Gastrocnemius medialis (tissue), 4 donors: ENCODE measurements at regions of chrX and their contacts with region 1.

Region 1: DNA sequence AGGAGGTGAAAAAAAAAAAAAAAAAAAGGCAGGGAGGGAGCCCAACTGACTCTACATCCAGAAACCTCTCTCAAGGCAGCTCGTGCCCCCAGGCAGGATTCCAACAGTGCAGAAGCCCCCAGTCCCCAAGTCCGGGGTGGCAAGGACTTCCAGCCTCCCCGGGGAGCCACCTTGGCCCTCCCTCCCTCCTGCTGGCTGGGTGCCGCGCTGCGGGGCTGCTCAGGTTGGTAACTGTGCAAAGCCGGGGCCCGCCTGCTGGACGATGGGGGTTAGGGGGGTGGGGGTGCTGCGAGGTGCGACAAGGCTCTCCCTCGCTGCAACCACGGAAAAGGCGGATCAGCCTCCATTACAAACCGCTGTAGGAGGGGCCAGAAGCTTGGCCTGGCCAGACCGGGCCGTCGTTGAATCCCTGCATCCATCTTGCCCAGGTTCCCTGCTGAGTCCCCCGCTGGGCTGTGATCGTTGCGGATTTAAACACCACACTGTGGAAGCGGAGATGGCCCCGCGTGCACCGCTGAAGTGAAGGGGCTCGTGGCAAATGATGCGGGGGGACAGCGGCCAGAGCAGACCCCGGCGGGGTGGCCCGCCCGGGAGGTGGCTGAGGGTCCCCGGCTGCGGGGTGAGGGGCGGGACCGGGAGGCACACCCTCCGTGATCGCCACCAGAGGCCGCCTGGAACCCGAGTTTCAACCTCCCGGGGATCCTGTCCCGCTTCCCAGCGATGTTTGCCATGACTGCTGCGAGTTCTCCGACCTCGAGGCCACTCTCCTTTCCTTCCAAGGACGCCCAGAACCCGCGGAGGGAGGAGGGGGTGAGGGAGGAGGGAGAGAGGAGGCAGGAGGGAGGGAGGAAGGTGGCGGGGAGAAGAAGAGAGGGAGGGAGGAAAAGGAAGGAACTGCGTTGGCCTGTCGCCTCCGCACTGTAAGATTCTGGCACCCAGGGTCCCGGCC is 58.0 kb upstream of the DDX3X start:
- DNase-seq: peak; percentile 20 to 44
- ATAC-seq: peak; percentile 78 to 89
- H3K4me3 ChIP-seq: peak overlapping the region; percentile 51 to 56 (median 53)
- H3K27ac ChIP-seq: peak overlapping the region in 1 of 4 donors; percentile 28
- H3K4me1 ChIP-seq: peaks cover 0 to 8% of the 10 kb centered on the region in 2 donors
- H3K27me3 ChIP-seq: peaks cover 0 to 16% (median 9%) of the 10 kb centered on the region in 3 donors
- CTCF ChIP-seq: peak; percentile 24 to 67 (median 55)
- POLR2A ChIP-seq: no peak

Region 2: GRCh38 chrX:39550795-39551361 is 1725.1 kb before region 1 on chrX:
- in situ Hi-C with region 1: no loop called
- intact Hi-C with region 1: no loop called
- DNase-seq: no peak
- ATAC-seq: no peak
- H3K4me3 ChIP-seq: no peak overlapping the region
- H3K27ac ChIP-seq: no peak overlapping the region
- H3K4me1 ChIP-seq: no peaks in the 10 kb centered on the region
- H3K27me3 ChIP-seq: no peaks in the 10 kb centered on the region
- CTCF ChIP-seq: no peak
- POLR2A ChIP-seq: no peak

Region 3: GRCh38 chrX:41412261-41413081 is 136.5 kb after region 1 on chrX:
- in situ Hi-C with region 1: loop called in 1 of 4 experiments (anchors 25 kb)
- intact Hi-C with region 1: no loop called
- DNase-seq: no peak
- ATAC-seq: no peak
- H3K4me3 ChIP-seq: no peak overlapping the region
- H3K27ac ChIP-seq: peak overlapping the region in 2 of 4 donors; percentile 31 to 40
- H3K4me1 ChIP-seq: no peaks in the 10 kb centered on the region
- H3K27me3 ChIP-seq: no peaks in the 10 kb centered on the region
- CTCF ChIP-seq: no peak
- POLR2A ChIP-seq: no peak

Region 4: DNA sequence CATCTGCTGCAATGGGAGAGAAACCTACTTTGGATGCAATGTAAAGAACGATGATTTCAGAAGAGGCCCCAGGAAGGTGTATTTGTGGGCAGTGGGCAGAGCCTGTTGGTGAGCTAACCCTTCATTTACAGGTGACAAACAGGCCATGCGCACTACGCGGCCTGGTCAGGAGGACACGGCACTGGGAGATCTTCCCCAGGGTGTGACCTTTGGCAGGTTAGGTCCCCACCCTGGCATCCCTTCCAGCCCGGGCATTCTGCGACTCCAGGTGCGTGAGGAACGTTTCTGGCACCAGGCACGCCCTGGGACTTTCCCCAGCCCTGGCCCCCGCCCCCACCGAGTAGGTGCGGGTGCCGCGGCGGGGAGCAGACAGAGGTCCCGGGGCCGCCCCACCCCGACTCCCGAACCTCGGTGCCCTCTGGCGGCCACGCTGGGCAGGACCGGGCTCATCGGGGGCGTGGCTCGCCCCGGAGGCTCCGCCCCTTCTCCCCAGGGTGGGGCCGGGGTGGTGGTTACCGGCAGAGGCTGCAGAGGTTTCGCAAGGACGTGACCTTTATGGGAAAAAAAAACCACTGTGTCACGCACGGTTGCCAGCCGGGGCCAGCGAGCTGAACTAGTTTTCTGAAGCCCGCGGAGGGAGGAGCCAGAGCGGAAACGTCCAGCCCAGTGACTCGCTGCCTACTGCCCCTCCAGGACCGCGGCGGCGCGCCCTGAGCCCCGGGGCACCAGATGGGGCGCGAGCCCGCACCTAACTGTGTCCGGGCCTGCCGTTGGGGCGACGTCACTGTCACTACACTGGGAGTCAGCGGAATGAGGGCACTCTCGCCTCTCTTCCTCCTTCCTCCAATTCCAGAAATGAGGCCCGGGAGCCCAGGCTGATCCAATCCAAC is 166.2 kb after region 1 on chrX:
- in situ Hi-C with region 1: no loop called
- intact Hi-C with region 1: loop called (anchors 2 kb)
- DNase-seq: peak; percentile 84 to 93
- ATAC-seq: peak; percentile 85 to 95
- H3K4me3 ChIP-seq: peak overlapping the region; percentile 34 to 57 (median 40)
- H3K27ac ChIP-seq: peak overlapping the region; percentile 75 to 92 (median 82)
- H3K4me1 ChIP-seq: peaks cover 0 to 7% of the 10 kb centered on the region in 2 donors
- H3K27me3 ChIP-seq: no peaks in the 10 kb centered on the region
- CTCF ChIP-seq: peak; percentile 60 to 86 (median 65)
- POLR2A ChIP-seq: peak; percentile 68 to 73

Region 5: GRCh38 chrX:41759817-41760216 is 483.9 kb after region 1 on chrX:
- in situ Hi-C with region 1: loop called in 2 of 4 experiments (anchors 25 kb)
- intact Hi-C with region 1: loop called (anchors 10 kb)
- DNase-seq: no peak
- ATAC-seq: no peak
- H3K4me3 ChIP-seq: no peak overlapping the region
- H3K27ac ChIP-seq: no peak overlapping the region
- H3K4me1 ChIP-seq: no peaks in the 10 kb centered on the region
- H3K27me3 ChIP-seq: no peaks in the 10 kb centered on the region
- CTCF ChIP-seq: peak in 3 of 5 experiments; percentile 12 to 45 (median 20)
- POLR2A ChIP-seq: no peak